ENCODE measurements at regions of chr15 and their contacts with region 1.

Region 1: DNA sequence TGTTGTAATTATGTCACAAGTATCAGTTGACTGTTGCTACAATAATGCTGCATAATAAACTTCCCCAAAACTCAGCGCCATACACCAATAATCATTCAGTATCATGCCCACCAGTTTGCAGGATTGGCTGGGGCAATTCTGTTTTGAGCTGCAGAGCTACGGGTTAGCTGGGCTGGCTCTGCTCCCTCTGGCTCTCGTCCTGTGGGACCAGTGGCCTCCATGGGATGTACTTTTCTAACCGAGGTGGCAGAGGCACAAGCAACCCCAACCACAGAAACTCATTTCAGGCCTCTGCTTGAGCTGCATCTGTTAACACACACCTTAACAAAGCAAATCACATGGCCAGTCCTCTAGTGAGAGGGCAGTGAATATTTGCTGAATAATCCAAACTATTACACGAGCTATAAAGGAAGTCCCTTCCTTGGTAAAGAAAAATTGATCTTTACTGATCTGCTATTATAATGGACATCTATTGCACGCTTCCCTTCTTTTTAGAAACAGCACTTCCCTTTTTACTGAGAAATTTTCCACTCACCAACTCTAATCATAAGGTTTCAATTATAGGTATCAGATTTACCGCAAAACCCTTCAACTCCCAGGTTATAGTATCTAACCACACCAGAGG is 10.9 kb upstream of the BCL2A1 start:
- DNase-seq: no peak
- H3K4me3 ChIP-seq: no peak overlapping the region
- H3K27ac ChIP-seq: no peak overlapping the region
- H3K4me1 ChIP-seq: peaks cover 0 to 3% (median 0%) of the 10 kb centered on the region in 3 donors
- H3K27me3 ChIP-seq: peaks cover 0 to 7% (median 0%) of the 10 kb centered on the region in 4 donors
- CTCF ChIP-seq: no peak
- POLR2A ChIP-seq: no peak

Region 2: GRCh38 chr15:79380755-79381497 is 601.0 kb before region 1 on chr15:
- intact Hi-C with region 1: loop called (anchors 10 kb)
- DNase-seq: no peak
- H3K4me3 ChIP-seq: no peak overlapping the region
- H3K27ac ChIP-seq: no peak overlapping the region
- H3K4me1 ChIP-seq: no peaks in the 10 kb centered on the region
- H3K27me3 ChIP-seq: no peaks in the 10 kb centered on the region
- CTCF ChIP-seq: peak; percentile 72 to 94 (median 81)
- POLR2A ChIP-seq: no peak

Region 3: DNA sequence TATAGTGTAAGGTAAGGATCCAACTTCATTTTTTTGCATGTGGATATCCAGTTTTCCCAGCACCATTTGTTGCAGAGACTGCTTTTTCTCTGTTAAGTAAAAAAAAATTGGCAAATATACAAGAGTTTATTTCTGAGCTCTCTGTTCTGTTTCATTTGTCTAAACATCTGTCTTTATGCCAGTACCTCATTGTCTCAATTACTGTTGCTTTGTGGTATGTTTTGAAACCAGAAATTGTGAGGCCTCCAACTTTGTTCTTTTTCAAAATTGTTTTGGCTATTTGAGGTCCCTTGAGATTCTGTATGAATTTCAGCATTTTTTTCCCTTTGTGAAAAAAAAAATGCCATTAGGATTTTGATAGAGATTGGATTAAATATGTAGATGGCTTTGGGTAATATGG is 399.3 kb before region 1 on chr15:
- intact Hi-C with region 1: no loop called
- DNase-seq: no peak
- H3K4me3 ChIP-seq: no peak overlapping the region
- H3K27ac ChIP-seq: no peak overlapping the region
- H3K4me1 ChIP-seq: no peaks in the 10 kb centered on the region
- H3K27me3 ChIP-seq: peaks cover 0 to 5% (median 0%) of the 10 kb centered on the region in 4 donors
- CTCF ChIP-seq: no peak
- POLR2A ChIP-seq: no peak